ENCODE measurements at regions of chr4 and their contacts with region 1.

Region 1: GRCh38 chr4:99389606-99390005 is 37.1 kb upstream of the ADH1C start:
- DNase-seq: no peak
- H3K4me3 ChIP-seq: no peak overlapping the region
- H3K27ac ChIP-seq: peak overlapping the region; percentile 65 to 76
- H3K4me1 ChIP-seq: peaks cover 0 to 4% of the 10 kb centered on the region in 2 donors
- H3K27me3 ChIP-seq: no peaks in the 10 kb centered on the region
- CTCF ChIP-seq: no peak

Region 2: DNA sequence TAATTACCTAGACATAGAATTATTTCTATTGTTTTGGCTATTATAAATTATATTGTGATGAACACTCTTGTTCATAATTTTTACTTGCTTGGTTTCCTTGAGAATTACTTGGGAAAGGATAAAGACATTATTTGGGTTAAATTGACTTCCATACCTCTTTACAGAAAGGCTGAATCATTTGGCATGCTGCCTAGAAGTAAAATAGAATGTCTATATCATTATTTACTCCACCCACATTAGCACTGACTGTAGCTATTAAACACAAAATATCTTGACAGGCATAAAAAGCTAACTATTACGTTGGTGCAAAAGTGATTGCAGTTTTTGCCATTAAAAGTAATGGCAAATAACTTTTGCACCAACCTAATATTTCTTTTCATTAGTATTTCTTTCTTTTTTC is 140.9 kb before region 1 on chr4:
- intact Hi-C with region 1: loop called (anchors 5 kb)
- DNase-seq: no peak
- H3K4me3 ChIP-seq: no peak overlapping the region
- H3K27ac ChIP-seq: peak overlapping the region; percentile 79 to 82
- H3K4me1 ChIP-seq: peaks cover 0 to 8% of the 10 kb centered on the region in 2 donors
- H3K27me3 ChIP-seq: no peaks in the 10 kb centered on the region
- CTCF ChIP-seq: no peak

Measured in ascending aorta (tissue), 2 donors.